ENCODE measurements at regions of chr6 and their contacts with region 1.

Region 1: GRCh38 chr6:3748208-3749066 is 3.1 kb downstream of the PXDC1 start:
- DNase-seq: peak; percentile 16
- H3K4me3 Mint-ChIP-seq: no peak overlapping the region
- H3K27ac Mint-ChIP-seq: no peak overlapping the region
- H3K4me1 Mint-ChIP-seq: peaks cover 2% of the 10 kb centered on the region
- H3K27me3 Mint-ChIP-seq: peaks cover 46% of the 10 kb centered on the region

Region 2: GRCh38 chr6:3697609-3698008 is 50.8 kb before region 1 on chr6:
- intact Hi-C with region 1: no loop called
- DNase-seq: no peak
- H3K4me3 Mint-ChIP-seq: no peak overlapping the region
- H3K27ac Mint-ChIP-seq: no peak overlapping the region
- H3K4me1 Mint-ChIP-seq: no peaks in the 10 kb centered on the region
- H3K27me3 Mint-ChIP-seq: peaks cover 14% of the 10 kb centered on the region

Region 3: DNA sequence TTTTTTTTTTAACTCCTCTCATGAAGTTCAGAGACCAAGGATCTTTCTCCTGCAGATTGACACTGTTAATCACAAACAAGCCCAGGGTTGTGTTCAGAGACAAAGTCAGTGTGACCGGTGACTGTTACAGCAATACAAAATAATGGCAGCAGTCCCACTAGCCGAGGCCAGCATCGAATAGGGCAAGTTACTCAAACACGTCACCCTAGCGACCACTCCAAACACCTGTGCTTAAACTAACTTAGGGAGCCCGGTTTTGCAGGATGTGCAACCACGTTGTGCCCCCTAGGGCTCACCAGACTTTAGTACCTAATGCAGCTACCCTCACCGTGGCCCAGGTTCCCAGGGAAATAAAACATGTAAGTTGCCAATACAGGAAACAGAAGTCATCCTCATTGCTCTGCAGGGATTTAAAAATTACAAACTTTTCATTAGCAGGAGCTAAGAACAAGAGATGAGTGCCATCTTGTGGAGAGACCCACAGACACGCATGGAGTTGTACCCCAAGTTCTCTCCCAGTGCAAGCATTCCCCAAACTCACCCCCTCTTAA is 138.8 kb after region 1 on chr6:
- intact Hi-C with region 1: loop called (anchors 2 kb)
- DNase-seq: no peak
- H3K4me3 Mint-ChIP-seq: no peak overlapping the region
- H3K27ac Mint-ChIP-seq: no peak overlapping the region
- H3K4me1 Mint-ChIP-seq: no peaks in the 10 kb centered on the region
- H3K27me3 Mint-ChIP-seq: peaks cover 7% of the 10 kb centered on the region

Region 4: DNA sequence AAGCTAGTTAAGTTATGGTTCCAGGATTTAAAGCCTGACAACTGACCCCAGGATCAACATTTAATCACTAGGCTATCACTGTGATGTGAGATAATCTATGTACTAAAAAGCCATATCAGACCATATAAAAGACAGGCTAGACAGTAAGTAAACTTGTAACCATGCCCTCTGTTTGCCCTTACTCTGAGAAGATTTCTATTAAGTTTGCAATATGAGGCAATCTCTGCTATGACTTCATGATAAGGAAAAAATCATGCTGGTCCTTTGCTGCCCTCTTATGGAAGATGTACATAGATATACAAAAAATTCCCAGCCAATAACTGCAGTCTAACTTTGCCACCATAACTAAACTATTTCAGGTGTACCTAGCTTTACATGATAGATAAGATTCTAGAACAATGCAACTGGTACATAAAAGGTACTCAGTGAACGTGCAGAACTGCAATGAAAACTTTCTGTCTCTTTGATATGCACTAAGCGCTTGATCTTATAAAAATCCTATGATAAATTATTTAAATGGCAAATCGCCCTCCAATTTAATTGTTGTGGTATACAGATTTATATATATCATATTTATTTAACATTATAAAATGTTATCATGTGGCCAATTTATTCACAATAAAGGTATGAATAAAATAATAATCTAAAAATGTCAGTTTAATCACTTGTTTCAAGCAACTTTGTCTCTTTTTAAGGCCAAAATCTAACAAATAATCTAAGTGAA is 260.0 kb after region 1 on chr6:
- intact Hi-C with region 1: loop called (anchors 1 kb)
- DNase-seq: no peak
- H3K4me3 Mint-ChIP-seq: no peak overlapping the region
- H3K27ac Mint-ChIP-seq: no peak overlapping the region
- H3K4me1 Mint-ChIP-seq: peaks cover 49% of the 10 kb centered on the region
- H3K27me3 Mint-ChIP-seq: no peaks in the 10 kb centered on the region

Measured in activated T-helper 2 cell treated with anti-CD3 and anti-CD28 coated beads, Interferon-gamma antibody, Interleukin-2, Interleukin-4, amounts not matched to agents 10 μg/mL and 5 μg/mL and 100 μg/mL, durations not matched to agents 14 hours and 24 hours and 36 hours (primary cell).